ENCODE measurements at regions of chr15 and their contacts with region 1.

Region 1: DNA sequence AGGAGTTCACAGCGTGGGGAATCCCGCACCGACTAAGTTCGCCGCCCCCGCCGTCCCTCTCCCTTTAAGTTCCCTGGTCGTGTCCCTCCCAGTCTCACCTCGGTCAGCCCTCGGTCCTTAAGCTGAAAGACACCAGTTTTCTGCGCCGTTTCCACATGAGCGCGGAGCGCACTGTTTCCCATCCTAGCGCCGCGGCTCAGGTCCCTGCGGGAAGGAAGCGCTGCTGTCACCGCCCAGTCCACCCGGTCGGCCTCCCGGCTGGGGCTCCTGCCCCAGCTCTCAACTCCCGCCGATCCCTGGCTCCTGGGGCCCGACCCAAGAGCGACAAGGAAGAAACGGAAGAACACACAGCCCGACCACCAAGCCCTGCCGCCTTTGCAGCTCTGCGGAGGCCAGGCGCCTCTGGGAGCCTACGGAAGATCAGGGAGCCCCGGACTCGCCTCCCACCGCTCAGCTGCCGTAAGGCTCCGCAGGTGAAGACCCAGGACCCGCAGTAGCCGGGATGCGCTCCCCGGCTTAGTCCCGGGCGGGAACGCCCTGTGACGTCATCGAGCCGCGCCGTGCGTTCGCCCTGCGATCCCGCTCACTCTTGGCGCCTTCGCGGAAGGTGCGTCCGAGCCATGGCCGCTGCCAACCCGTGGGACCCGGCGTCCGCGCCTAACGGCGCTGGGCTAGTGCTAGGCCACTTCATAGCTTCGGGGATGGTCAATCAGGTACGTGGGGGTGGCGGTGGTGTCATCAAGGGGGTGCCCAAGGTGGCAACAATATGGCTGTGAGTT is at the starts of genes HAUS2 and LRRC57:
- DNase-seq: peak; percentile 93 to 97
- ATAC-seq: peak; percentile 96
- H3K4me3 ChIP-seq: peak within 1 kb of the TSS; percentile 79 to 82
- H3K27ac ChIP-seq: peak within 1 kb of the TSS; percentile 3 to 82
- H3K4me1 ChIP-seq: no peaks in the 10 kb centered on the region
- H3K27me3 ChIP-seq: no peaks in the 10 kb centered on the region
- total RNA-seq, gene HAUS2: 16.0 to 21.9 TPM
- total RNA-seq, gene LRRC57: 16.8 to 20.8 TPM

Region 2: DNA sequence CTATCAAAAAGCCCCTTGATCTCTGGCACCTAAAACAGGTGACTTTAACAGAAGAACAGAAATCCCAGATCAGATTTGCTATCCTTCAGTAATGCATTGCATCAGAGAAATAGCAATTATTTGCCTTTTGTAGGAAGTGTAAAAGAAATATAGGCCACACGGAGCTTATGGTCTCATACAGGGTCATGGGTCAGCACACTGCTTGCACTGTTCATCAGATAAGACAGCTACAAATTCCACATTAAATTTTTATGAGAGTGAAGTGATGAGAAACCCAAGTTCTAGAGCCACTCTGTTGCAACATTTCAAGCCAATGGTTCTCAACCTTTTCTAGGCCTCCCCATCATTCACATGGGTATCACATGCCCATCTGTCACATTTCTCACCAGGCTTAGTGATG is 241.8 kb before region 1 on chr15:
- intact Hi-C with region 1: no loop called
- DNase-seq: no peak
- ATAC-seq: no peak
- H3K4me3 ChIP-seq: no peak overlapping the region
- H3K27ac ChIP-seq: no peak overlapping the region
- H3K4me1 ChIP-seq: no peaks in the 10 kb centered on the region
- H3K27me3 ChIP-seq: no peaks in the 10 kb centered on the region

Region 3: GRCh38 chr15:42348083-42348482 is 200.4 kb before region 1 on chr15:
- intact Hi-C with region 1: no loop called
- DNase-seq: no peak
- ATAC-seq: no peak
- H3K4me3 ChIP-seq: no peak overlapping the region
- H3K27ac ChIP-seq: no peak overlapping the region
- H3K4me1 ChIP-seq: no peaks in the 10 kb centered on the region
- H3K27me3 ChIP-seq: no peaks in the 10 kb centered on the region

Region 4: DNA sequence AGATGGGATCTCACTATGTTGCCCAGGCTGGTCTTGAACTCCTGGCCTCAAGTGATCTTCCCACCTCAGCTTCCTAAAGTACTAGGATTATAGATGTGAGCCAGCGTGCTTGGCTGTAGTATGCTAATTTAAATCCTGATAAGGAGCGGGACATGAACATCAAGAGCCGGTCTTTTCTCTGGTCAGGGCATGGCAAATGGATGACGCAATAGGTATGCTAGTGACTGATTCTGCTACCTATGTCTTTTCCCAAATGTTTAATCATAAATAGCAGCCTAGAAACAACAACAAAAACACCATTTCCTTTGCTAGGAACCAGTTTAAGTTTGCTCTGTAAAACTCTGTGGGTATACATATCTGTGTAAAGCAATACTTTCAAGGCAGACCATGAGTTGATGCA is 91.7 kb after region 1 on chr15:
- intact Hi-C with region 1: loop called in 1 of 2 experiments (anchors 10 kb)
- DNase-seq: no peak
- ATAC-seq: no peak
- H3K4me3 ChIP-seq: no peak overlapping the region
- H3K27ac ChIP-seq: no peak overlapping the region
- H3K4me1 ChIP-seq: no peaks in the 10 kb centered on the region
- H3K27me3 ChIP-seq: no peaks in the 10 kb centered on the region

Region 5: DNA sequence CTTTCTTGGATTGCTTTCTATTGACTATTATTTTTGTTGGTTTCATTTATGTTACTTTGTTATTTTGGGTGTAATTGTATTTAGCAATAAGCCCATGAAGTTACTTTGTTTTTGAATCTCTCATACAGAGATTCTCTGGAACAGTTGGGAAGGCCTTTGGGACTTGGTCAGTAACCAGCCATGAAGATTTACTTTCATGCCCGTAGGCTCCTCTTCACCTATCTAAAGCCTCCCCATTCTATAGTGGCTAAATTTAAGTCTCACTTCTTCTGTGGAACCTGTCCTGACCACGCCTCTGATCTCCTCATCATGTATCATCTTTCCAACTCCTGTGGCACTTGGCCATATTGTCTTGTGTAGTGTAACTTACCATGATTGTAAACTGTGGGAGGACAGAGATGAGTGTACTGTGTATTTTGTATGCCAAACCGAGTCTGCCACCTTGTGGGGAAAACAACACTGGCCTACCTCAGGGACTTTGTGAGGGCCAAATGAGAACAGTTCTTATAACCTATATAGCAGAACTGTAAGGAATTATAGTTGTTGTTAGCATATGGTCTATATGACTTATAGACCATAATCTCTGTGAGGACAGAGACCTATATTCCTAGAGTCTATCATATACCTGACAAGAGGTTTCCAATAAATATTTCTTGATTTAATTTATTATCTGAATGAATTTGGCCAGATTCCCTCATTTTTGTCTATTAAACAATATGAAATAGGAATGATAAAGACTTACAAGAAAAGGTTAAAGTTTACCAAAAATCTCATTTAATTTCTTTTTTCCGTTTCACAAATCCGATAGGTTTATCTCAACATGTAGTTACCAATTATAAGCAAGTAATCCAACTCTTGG is 102.0 kb after region 1 on chr15:
- intact Hi-C with region 1: loop called (anchors 5 to 10 kb)
- DNase-seq: peak in 1 of 2 donors; percentile 61
- ATAC-seq: peak; percentile 85
- H3K4me3 ChIP-seq: no peak overlapping the region
- H3K27ac ChIP-seq: no peak overlapping the region
- H3K4me1 ChIP-seq: no peaks in the 10 kb centered on the region
- H3K27me3 ChIP-seq: no peaks in the 10 kb centered on the region

Region 6: GRCh38 chr15:42665827-42666226 is 117.4 kb after region 1 on chr15:
- intact Hi-C with region 1: no loop called
- DNase-seq: no peak
- ATAC-seq: no peak
- H3K4me3 ChIP-seq: no peak overlapping the region
- H3K27ac ChIP-seq: no peak overlapping the region
- H3K4me1 ChIP-seq: no peaks in the 10 kb centered on the region
- H3K27me3 ChIP-seq: no peaks in the 10 kb centered on the region

Measured in aorta (tissue), 5 donors.